ENCODE measurements at regions of chr6 and their contacts with region 1.

Region 1: DNA sequence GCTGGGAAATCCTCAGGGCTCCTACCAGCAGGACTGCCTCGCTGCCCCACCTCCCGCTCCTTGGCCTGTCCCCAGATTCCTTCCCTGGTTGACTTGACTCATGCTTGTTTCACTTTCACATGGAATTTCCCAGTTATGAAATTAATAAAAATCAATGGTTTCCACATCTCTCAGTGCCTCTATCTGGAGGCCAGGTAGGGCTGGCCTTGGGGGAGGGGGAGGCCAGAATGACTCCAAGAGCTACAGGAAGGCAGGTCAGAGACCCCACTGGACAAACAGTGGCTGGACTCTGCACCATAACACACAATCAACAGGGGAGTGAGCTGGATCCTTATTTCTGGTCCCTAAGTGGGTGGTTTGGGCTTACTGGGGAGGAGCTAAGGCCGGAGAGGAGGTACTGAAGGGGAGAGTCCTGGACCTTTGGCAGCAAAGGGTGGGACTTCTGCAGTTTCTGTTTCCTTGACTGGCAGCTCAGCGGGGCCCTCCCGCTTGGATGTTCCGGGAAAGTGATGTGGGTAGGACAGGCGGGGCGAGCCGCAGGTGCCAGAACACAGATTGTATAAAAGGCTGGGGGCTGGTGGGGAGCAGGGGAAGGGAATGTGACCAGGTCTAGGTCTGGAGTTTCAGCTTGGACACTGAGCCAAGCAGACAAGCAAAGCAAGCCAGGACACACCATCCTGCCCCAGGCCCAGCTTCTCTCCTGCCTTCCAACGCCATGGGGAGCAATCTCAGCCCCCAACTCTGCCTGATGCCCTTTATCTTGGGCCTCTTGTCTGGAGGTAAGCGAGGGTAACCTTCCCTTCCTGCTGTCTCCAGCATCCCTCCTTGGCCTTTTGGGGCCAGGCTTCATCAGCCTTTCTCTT is at the start of gene CFB:
- DNase-seq: peak; percentile 41 to 57
- ATAC-seq: peak; percentile 64 to 81
- H3K4me3 ChIP-seq: no peak within 1 kb of the TSS
- H3K27ac ChIP-seq: peak within 1 kb of the TSS; percentile 61 to 83; a peak in 5 of 6 replicates
- H3K4me1 ChIP-seq: peaks cover 25% of the 10 kb centered on the region
- CTCF ChIP-seq: no peak
- EP300 ChIP-seq: no peak
- POLR2A ChIP-seq: no peak
- RAD21 ChIP-seq: no peak
- polyA plus RNA-seq, gene CFB: 5.6 and 8.6 TPM in 2 replicates

Region 2: DNA sequence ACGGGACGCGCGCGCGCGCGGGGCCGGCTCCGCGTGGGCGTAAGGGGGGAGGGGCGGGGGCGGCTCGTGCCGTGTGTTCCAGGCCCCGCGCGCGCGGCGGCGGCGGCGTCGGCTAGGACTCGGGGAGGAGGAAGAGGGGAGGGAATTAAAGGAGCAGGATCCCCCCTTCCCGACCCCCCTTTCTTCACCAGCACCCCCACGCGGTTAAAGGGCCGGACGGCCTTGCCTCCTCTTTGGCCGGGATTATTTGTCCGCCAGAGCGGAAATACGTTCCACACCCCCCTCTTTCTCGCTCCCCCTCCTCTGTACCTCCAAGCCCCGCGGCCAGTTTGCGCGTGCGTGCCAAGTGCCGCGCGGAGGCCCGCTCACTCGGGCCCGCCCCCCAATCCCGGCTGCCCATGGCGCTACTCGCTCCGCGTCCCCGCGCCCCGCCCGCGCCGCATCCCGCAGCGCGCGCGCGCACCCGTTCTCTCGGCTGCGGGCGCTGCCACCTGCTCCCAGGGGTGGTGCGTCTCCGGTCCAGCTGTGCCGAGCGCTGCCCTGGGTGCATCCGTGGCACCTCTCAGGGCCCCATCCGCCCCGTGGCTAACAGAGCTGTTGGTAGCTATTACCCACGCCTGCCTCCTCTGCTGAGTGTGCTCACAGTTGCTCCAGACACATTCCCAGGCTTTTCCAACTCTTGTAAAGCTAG is 43.6 kb before region 1 on chr6 and contains the start of gene ZBTB12:
- CTCF ChIA-PET with region 1: interaction called, 26 read pairs
- POLR2A ChIA-PET with region 1: interaction called, 14 read pairs
- DNase-seq: peak; percentile 77 to 94
- ATAC-seq: peak; percentile 71 to 80
- H3K4me3 ChIP-seq: peak within 1 kb of the TSS; percentile 90
- H3K27ac ChIP-seq: peak within 1 kb of the TSS; percentile 98
- H3K4me1 ChIP-seq: peaks cover 18% of the 10 kb centered on the region
- CTCF ChIP-seq: no peak
- EP300 ChIP-seq: no peak
- POLR2A ChIP-seq: peak; percentile 57
- RAD21 ChIP-seq: peak; percentile 35 to 45; a peak in 4 of 5 replicates
- polyA plus RNA-seq, gene ZBTB12: 2.2 and 2.9 TPM in 2 replicates

Region 3: GRCh38 chr6:31933537-31933936 is 12.2 kb before region 1 on chr6:
- CTCF ChIA-PET with region 1: no interaction called
- POLR2A ChIA-PET with region 1: no interaction called
- DNase-seq: no peak
- ATAC-seq: no peak; a peak in 1 of 6 replicates
- H3K4me3 ChIP-seq: no peak overlapping the region
- H3K27ac ChIP-seq: no peak overlapping the region
- H3K4me1 ChIP-seq: no peaks in the 10 kb centered on the region; the same call in 2 of the 3 replicates
- CTCF ChIP-seq: no peak
- EP300 ChIP-seq: no peak
- POLR2A ChIP-seq: no peak
- RAD21 ChIP-seq: no peak

Region 4: DNA sequence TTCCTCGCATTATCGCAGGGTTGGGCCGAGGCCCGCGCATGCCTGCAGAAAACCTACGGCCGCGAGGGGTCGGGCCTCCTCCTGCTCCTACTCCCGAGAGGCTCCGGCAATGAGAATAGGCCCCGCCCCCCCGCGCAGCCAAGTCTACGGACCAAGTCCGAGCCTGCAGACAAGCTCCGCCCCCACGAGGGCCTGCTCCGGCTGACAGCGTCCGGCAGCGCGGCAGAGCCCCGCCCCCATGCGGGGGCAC is 249.8 kb after region 1 on chr6:
- CTCF ChIA-PET with region 1: no interaction called
- POLR2A ChIA-PET with region 1: no interaction called
- DNase-seq: peak; percentile 86 to 99
- ATAC-seq: no peak
- H3K4me3 ChIP-seq: peak overlapping the region; percentile 74; the same call in 1 of the 3 replicates
- H3K27ac ChIP-seq: peak overlapping the region; percentile 94; a peak in 3 of 6 replicates
- H3K4me1 ChIP-seq: peaks cover 28% of the 10 kb centered on the region
- CTCF ChIP-seq: no peak
- EP300 ChIP-seq: no peak
- POLR2A ChIP-seq: no peak
- RAD21 ChIP-seq: no peak